Panc1 (cell line): ENCODE measurements at regions of chr1 and their contacts with region 1.

Region 1: GRCh38 chr1:48572646-48573261 is 100.8 kb upstream of the SPATA6 start:
- DNase-seq: peak; percentile 15
- ATAC-seq: peak; percentile 93
- H3K4me3 ChIP-seq: no peak overlapping the region
- H3K27ac ChIP-seq: no peak overlapping the region
- H3K4me1 ChIP-seq: no peaks in the 10 kb centered on the region
- H3K27me3 ChIP-seq: no peaks in the 10 kb centered on the region; the same call in 1 of the 2 replicates
- CTCF ChIP-seq: peak; percentile 79

Region 2: GRCh38 chr1:48294656-48295055 is 278.1 kb before region 1 on chr1:
- CTCF ChIA-PET with region 1: no interaction called
- POLR2A ChIA-PET with region 1: interaction called, 17 read pairs
- in situ Hi-C with region 1: no loop called
- intact Hi-C with region 1: no loop called
- DNase-seq: no peak
- ATAC-seq: no peak
- H3K4me3 ChIP-seq: no peak overlapping the region
- H3K27ac ChIP-seq: no peak overlapping the region
- H3K4me1 ChIP-seq: no peaks in the 10 kb centered on the region
- H3K27me3 ChIP-seq: no peaks in the 10 kb centered on the region
- CTCF ChIP-seq: no peak

Region 3: DNA sequence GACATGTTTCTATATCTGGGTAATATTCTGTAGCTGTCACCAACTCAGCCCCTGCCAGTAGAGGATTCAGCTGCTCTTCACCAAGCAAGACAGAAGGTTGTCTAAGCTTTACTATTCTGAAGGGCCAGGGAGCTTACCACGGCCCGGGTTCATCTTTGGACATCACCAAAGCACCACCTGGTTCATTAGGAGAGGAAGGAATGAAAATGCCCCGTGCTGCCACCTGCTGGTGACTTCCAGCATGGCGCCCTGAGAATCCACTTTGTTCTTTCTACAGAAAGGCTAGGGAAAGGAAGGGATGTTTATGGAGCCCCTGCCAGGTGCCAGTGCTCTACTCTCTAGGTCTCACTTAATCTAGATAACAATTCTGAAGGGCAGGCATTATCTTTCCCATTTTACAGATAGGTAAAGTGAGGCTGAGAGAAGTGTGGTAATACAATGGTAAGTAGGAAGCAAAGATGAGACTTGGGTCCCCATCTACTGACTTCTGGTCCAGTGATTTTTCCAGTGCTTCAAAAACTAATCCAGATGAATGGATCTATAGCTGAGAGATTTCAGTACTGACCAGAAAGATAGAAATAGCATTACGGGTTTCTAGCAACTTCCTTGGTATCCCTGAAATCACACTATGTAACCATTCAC is 124.4 kb after region 1 on chr1:
- CTCF ChIA-PET with region 1: no interaction called
- POLR2A ChIA-PET with region 1: interaction called, 6 read pairs
- in situ Hi-C with region 1: no loop called
- intact Hi-C with region 1: loop called (anchors 2 kb)
- DNase-seq: peak; percentile 30
- ATAC-seq: peak; percentile 68; the same call in 1 of the 2 replicates
- H3K4me3 ChIP-seq: no peak overlapping the region
- H3K27ac ChIP-seq: no peak overlapping the region
- H3K4me1 ChIP-seq: no peaks in the 10 kb centered on the region
- H3K27me3 ChIP-seq: peaks cover 10% of the 10 kb centered on the region; the same call in 1 of the 2 replicates
- CTCF ChIP-seq: peak; percentile 93

Region 4: DNA sequence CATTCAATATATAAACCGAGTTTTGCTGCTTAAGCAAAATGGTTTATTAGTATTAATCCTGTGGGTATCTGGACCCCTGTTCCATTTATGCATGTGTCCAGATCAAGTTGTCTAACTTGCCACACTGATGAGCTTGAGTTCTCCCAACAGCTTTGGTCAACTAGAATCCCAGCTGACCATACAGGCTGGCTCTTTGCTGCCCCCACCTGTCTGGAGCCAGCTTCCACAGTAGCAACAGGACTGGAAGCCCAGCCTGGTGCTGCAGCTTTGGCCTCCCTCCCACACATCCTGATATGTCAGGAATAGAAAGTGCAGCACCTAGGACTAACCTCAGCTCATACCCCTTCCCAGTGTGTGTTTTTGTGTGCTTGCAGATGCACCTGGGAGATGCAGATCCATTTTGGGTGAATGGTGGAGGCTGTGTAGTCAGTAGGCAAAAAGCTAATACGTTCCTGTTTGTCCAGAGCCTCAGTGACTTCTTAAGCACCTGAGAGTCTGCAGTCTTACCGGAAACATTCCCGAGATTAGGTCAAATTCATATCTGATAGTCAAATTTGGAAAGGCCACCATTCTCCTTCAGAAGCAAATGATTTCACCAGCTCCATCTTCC is 244.9 kb after region 1 on chr1:
- CTCF ChIA-PET with region 1: no interaction called
- POLR2A ChIA-PET with region 1: no interaction called
- in situ Hi-C with region 1: no loop called
- intact Hi-C with region 1: loop called (anchors 2 kb)
- DNase-seq: peak; percentile 28
- ATAC-seq: peak; percentile 82
- H3K4me3 ChIP-seq: no peak overlapping the region
- H3K27ac ChIP-seq: no peak overlapping the region
- H3K4me1 ChIP-seq: no peaks in the 10 kb centered on the region
- H3K27me3 ChIP-seq: no peaks in the 10 kb centered on the region
- CTCF ChIP-seq: peak; percentile 89

Region 5: DNA sequence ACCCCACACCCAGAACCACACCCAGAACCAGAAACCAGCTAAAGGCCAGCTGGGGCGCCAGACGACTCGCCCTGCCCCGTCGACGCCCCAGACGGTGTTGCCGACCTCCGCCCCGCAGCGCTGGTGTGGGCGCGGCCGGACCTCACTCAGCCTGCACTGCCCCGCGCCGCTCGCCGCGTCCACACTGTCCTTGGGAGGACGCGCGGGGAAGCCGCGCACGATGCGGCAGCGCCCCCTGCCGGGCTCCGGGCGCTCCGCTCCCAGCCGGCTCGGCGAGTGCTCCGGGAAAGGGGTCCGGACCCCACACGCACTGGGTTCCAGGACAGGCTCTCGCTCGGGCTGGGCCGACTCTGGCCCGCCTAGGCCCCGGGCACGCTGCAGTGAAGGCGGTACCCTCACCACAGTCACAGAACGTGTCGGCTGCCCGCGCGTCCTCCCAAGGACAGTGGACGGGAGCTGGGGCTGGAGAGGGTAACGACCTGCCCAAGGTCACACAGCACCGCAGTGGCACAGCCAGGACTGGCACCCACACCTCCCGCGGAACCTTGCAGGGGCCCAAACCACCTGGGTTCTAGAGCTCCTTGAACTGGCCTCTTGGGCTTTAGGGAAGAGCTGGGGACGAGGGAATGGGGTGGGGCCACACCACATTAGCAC is 1760.3 kb after region 1 on chr1:
- CTCF ChIA-PET with region 1: no interaction called
- POLR2A ChIA-PET with region 1: no interaction called
- in situ Hi-C with region 1: no loop called
- intact Hi-C with region 1: loop called (anchors 10 kb)
- DNase-seq: no peak
- ATAC-seq: peak; percentile 95
- H3K4me3 ChIP-seq: peak overlapping the region; percentile 35 to 70
- H3K27ac ChIP-seq: no peak overlapping the region
- H3K4me1 ChIP-seq: no peaks in the 10 kb centered on the region; the same call in 1 of the 2 replicates
- H3K27me3 ChIP-seq: peaks cover 17% of the 10 kb centered on the region
- CTCF ChIP-seq: peak; percentile 97